Ascending aorta (tissue), 2 donors: ENCODE measurements at regions of chr7 and their contacts with region 1.

Region 1: GRCh38 chr7:63899691-63900393 is 98.8 kb upstream of the ZNF722 start:
- DNase-seq: peak in 1 of 2 donors; percentile 36
- H3K4me3 ChIP-seq: peak overlapping the region; percentile 26 to 77
- H3K27ac ChIP-seq: peak overlapping the region in 1 of 2 donors; percentile 35
- H3K4me1 ChIP-seq: no peaks in the 10 kb centered on the region
- H3K27me3 ChIP-seq: no peaks in the 10 kb centered on the region
- CTCF ChIP-seq: no peak

Region 2: DNA sequence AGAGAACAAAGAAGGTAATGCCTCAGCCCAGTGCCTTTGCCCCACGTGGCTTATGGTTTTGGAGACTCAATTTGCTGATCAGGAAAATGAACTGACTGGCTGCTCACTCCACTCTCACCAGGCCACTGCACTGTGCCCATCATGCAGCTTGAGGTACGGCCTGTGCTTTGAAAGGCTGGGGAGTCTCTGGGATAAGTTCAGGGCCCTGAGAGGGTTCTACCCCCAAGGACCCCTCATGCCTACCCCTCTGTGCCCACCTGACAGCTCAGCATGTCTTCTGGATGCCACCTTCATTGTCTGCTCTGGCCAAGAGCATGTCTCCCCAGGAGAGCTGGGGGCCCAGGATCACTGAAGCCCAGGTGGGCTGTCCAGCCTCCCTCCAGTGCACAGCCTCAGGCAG is 53.3 kb after region 1 on chr7:
- intact Hi-C with region 1: loop called (anchors 10 kb)
- DNase-seq: no peak
- H3K4me3 ChIP-seq: no peak overlapping the region
- H3K27ac ChIP-seq: no peak overlapping the region
- H3K4me1 ChIP-seq: no peaks in the 10 kb centered on the region
- H3K27me3 ChIP-seq: no peaks in the 10 kb centered on the region
- CTCF ChIP-seq: no peak

Region 3: GRCh38 chr7:63998549-63998948 is 98.7 kb after region 1 on chr7 and contains the start of gene ZNF722:
- intact Hi-C with region 1: no loop called
- DNase-seq: no peak
- H3K4me3 ChIP-seq: no peak within 1 kb of the TSS
- H3K27ac ChIP-seq: no peak within 1 kb of the TSS
- H3K4me1 ChIP-seq: no peaks in the 10 kb centered on the region
- H3K27me3 ChIP-seq: no peaks in the 10 kb centered on the region
- CTCF ChIP-seq: no peak
- total RNA-seq, gene ZNF722: not detected

Region 4: DNA sequence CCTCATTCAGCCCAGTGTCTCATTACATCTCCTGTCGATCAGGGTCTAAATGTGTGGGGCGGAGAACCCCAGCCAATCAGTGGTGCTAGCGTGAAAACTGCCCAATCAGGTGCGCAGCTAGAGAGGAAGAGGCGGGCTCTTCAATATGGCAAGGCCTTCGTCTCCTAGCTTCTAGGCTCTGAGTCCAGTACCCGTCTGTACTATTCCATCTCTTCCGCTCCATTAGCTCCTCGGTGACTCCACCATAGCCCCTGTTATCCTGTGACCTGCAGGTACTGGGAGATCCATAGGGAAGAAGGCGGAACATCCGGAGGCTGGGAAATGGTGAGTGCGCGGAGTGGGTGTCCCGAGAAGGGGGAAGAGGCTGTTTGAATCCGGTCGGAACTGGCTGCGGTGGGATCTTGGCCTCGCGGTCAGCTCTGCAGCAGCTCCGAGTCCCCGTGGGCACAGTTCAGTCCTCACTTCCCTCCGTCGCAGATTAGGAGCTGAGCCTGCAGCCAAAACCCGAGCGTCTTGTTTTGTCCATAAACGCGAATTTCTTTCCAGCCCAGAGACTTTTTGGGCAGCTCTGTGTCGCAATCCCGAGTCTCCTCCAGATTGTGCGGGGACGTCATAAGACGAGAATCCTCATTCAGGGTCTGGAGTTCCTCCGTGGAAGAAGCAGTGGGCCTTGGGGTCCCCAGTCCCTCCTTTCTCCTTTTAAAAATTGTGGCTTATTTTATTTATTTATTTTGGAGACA is 145.6 kb after region 1 on chr7 and contains the start of gene ZNF727:
- intact Hi-C with region 1: no loop called
- DNase-seq: peak in 1 of 2 donors; percentile 44
- H3K4me3 ChIP-seq: peak within 1 kb of the TSS; percentile 42 to 80
- H3K27ac ChIP-seq: peak within 1 kb of the TSS; percentile 40 to 80
- H3K4me1 ChIP-seq: no peaks in the 10 kb centered on the region
- H3K27me3 ChIP-seq: no peaks in the 10 kb centered on the region
- CTCF ChIP-seq: no peak
- total RNA-seq, gene ZNF727: not detected